Right ventricle myocardium superior (tissue), 1 donor: ENCODE measurements at regions of chr5 and their contacts with region 1.

Region 1: GRCh38 chr5:153711755-153712154 is 221.3 kb downstream of the GRIA1 start:
- DNase-seq: no peak
- ATAC-seq: no peak

Region 2: DNA sequence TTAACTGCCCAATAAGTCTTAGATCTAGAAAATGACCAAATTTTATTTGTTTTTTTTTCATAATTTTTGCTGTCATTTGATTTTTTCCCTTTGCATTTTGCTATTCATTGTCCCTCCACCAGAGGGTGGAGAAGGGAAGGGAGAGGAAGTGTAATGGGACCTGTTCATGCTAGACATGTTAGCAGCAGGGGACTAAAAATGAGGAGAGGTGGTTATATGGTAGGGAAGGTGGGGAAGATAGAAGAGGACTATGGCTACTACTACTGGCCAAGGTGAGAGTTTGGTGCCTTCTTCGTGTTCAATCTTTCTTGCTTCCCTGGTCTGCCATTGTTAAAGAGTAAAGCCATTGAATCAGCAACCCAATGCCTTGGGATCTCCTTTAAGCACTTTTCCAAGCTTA is 214.9 kb before region 1 on chr5:
- intact Hi-C with region 1: loop called (anchors 5 kb)
- DNase-seq: no peak
- ATAC-seq: peak; percentile 49

Region 3: DNA sequence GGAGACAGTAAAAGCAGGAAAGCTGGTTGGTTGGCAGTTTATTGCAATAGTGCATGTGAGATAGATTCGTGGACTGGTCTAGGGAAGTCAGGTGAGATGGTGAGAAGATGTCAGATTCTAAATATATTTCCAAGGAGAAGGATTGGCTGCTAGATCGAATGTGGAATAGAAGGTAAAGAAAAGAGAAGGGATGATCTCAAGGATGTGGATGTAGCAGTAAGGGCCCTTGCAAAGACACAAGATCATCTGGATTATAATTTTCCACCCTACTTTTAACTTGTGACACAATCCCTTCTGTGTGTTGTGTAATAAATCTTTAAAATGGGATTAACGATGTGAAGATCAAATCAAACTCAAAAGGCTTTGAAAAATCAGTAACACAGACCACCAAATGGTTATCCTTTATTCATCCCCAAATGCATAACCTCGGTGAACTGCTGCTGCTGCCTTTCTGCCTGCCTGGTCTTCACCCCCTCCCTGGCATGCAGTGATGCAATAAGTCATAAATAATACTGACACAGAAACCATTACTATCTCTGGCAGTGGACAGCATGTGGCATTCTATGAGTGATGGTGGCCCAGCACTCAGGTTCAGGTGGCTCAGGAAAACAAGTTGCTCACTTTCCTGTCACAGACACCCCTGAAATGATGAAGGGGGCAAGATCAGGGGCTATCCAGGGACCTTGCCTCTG is 148.6 kb after region 1 on chr5:
- intact Hi-C with region 1: no loop called
- DNase-seq: no peak
- ATAC-seq: no peak

Region 4: DNA sequence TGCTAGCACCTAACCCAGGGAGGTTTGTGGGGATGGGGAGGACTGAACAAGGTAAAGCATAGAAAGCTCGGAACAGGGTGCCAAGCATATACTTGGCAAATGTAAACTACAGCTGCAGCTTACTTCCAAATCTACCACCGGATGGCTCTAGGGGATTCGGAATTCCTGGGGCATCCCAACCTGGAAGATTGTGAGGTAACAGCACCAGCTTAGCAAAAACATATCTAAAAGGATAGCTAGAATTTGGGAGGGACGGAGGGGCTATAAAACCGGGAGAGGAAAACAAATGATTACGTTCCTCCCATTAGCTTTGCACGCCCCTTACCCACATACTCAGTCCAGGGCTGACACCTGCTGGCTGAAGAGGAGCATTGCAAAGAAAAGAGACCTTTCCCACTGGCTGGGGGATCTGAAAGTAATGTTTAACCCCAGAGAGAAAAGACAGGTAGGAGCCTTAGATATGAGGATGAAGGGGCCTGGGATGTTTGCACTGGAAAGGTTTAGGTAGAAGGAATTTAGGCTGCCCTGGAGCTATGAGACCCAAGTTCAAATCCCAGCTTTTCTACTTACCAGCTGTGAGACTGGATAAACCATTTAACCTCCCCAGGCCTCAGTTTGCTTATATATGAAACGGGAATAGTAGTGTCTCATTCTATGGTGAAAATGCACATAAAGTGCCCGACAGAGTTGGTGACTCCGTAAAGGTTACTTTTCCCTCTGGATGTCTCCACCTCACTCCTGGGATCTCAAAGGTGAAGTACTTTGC is 253.3 kb after region 1 on chr5:
- intact Hi-C with region 1: no loop called
- DNase-seq: no peak
- ATAC-seq: peak; percentile 92